Activated CD8-positive, alpha-beta T cell treated with anti-CD3 and anti-CD28 coated beads, Interleukin-2, amount 10 ng/mL, durations not matched to agents 7 days and 5 days (primary cell): ENCODE measurements at regions of chr6 and their contacts with region 1.

Region 1: GRCh38 chr6:166775180-166776081 is 148.4 kb upstream of the RPS6KA2 start:
- DNase-seq: peak; percentile 77
- ATAC-seq: peak; percentile 77
- H3K4me3 Mint-ChIP-seq: no peak overlapping the region
- H3K27ac Mint-ChIP-seq: no peak overlapping the region
- H3K4me1 Mint-ChIP-seq: peaks cover 15% of the 10 kb centered on the region
- H3K27me3 Mint-ChIP-seq: peaks cover 8% of the 10 kb centered on the region

Region 2: GRCh38 chr6:166715065-166715464 is 60.4 kb before region 1 on chr6:
- CTCF ChIA-PET with region 1: no interaction called
- POLR2A ChIA-PET with region 1: no interaction called
- DNase-seq: no peak
- ATAC-seq: no peak
- H3K4me3 Mint-ChIP-seq: no peak overlapping the region
- H3K27ac Mint-ChIP-seq: no peak overlapping the region
- H3K4me1 Mint-ChIP-seq: no peaks in the 10 kb centered on the region
- H3K27me3 Mint-ChIP-seq: peaks cover 9% of the 10 kb centered on the region

Region 3: GRCh38 chr6:166786704-166787293 is 11.4 kb after region 1 on chr6:
- CTCF ChIA-PET with region 1: interaction called, 14 read pairs
- POLR2A ChIA-PET with region 1: no interaction called
- DNase-seq: peak; percentile 32
- ATAC-seq: no peak
- H3K4me3 Mint-ChIP-seq: no peak overlapping the region
- H3K27ac Mint-ChIP-seq: no peak overlapping the region
- H3K4me1 Mint-ChIP-seq: no peaks in the 10 kb centered on the region
- H3K27me3 Mint-ChIP-seq: peaks cover 7% of the 10 kb centered on the region

Region 4: GRCh38 chr6:166956444-166957086 is 181.1 kb after region 1 on chr6 and contains the start of gene RNASET2:
- CTCF ChIA-PET with region 1: interaction called, 17 read pairs
- POLR2A ChIA-PET with region 1: no interaction called
- DNase-seq: peak; percentile 98
- ATAC-seq: peak; percentile 85
- H3K4me3 Mint-ChIP-seq: peak within 1 kb of the TSS; percentile 82
- H3K27ac Mint-ChIP-seq: peak within 1 kb of the TSS; percentile 95
- H3K4me1 Mint-ChIP-seq: peaks cover 71% of the 10 kb centered on the region
- H3K27me3 Mint-ChIP-seq: no peaks in the 10 kb centered on the region
- total RNA-seq, gene RNASET2: 46.9 to 48.7 TPM

Region 5: DNA sequence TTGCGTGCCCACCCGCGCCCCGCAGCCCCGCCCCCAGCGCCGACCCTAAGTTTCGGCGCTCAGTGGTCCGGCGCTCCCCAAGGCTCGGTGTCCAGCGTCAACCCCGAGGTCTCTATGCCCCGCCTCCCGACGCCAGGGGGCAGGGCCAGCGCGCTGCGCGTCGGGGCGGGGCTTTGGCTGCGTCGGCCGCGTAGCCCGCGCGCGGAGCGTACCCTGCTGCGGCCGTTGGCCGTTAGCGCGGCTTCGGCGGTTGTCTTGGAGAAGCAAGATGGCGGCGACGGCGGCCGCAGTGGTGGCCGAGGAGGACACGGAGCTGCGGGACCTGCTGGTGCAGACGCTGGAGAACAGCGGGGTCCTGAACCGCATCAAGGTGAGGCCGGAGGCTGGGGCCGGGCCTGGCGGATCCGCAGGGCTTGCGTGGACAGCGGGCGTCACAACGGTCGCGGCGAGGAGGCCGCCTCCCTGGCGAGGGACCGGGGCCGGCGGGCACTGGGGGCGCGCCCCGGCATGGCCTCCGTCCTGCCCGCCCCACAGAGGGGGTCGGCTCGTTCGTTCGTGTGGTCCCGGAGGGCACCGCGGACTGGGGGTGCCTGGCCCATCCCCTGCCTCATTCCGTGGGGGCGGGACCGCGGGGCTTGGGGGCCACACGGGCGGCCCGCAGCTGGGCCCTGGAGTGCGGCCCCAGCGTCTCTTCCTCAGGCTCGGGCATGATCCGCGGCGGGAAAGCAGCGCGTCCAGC is 223.9 kb after region 1 on chr6 and contains the start of gene CEP43:
- CTCF ChIA-PET with region 1: interaction called, 15 read pairs
- POLR2A ChIA-PET with region 1: no interaction called
- DNase-seq: peak; percentile 94
- ATAC-seq: peak; percentile 94
- H3K4me3 Mint-ChIP-seq: peak within 1 kb of the TSS; percentile 94
- H3K27ac Mint-ChIP-seq: peak within 1 kb of the TSS; percentile 91
- H3K4me1 Mint-ChIP-seq: peaks cover 40% of the 10 kb centered on the region
- H3K27me3 Mint-ChIP-seq: no peaks in the 10 kb centered on the region
- total RNA-seq, gene CEP43: 25.6 to 28.1 TPM